ENCODE measurements at regions of chr22 and their contacts with region 1.

Region 1: DNA sequence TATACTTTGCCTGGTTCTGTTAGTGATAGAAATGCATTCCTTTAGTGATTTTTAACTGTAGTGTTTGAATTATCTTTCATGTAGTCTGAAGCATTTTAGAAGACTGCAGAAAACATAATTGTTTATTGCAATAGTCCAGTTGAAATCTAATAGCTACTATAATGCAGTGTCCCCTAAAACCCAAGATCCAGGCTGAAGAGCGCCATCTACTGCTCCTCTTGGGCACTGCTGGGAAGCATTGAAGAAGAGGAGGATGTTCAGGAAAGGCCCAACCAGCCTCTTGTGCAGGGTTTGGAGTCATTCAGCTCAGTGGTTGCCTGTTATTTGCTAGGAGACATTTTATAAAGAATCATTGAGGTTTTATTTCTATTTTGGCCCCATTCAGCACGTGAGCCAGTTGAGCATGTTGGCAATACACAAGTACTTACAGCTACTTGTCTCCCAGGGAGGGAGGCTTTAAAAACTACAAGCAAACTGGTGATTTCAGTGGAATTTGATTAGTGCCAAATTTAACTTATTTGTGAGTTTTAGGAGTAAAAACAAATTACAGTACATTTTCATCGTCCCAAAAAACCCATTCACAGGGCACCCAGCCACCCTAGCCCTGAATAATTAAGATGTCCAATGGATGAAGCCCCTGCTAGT is 74.9 kb upstream of the HORMAD2 start:
- H3K4me3 ChIP-seq: no peak overlapping the region
- H3K27ac ChIP-seq: no peak overlapping the region
- H3K4me1 ChIP-seq: no peaks in the 10 kb centered on the region
- CTCF ChIP-seq: peak; percentile 71

Region 2: DNA sequence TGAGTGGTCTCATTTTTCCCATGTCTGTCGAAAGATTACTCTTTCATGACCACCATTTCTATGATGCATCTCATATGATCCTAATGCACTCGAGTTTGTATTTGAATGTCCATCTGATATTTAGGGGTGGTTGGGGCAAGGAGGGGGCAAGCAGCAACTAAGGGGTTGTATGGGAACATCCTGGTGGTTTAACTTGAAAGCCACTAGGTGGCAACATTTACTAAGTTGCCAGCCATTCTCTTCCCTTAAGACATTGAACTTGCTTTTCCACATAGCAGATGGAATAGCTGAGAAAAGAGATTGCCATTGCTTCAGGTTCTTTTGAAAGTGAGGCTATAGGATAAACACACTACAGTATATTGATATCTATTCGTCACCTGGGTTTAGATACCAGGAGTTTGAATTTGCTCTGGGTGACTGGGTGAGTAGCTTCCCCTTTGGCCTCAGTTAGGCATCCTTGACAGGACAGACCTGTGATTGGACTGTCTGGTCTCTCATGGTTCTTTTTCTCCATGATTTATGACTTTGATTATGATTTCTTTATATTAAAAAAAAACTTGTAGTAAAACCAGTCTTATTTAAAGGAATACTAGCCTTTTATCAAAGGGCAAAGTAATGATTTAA is 369.5 kb before region 1 on chr22:
- CTCF ChIA-PET with region 1: interaction called, 43 read pairs
- POLR2A ChIA-PET with region 1: no interaction called
- H3K4me3 ChIP-seq: no peak overlapping the region
- H3K27ac ChIP-seq: no peak overlapping the region
- H3K4me1 ChIP-seq: no peaks in the 10 kb centered on the region; the same call in 1 of the 2 replicates
- CTCF ChIP-seq: peak; percentile 70; the same call in 1 of the 2 replicates

Region 3: GRCh38 chr22:29772170-29772641 is 233.1 kb before region 1 on chr22:
- CTCF ChIA-PET with region 1: interaction called, 11 read pairs
- POLR2A ChIA-PET with region 1: no interaction called
- H3K4me3 ChIP-seq: no peak overlapping the region
- H3K27ac ChIP-seq: no peak overlapping the region
- H3K4me1 ChIP-seq: no peaks in the 10 kb centered on the region
- CTCF ChIP-seq: 0 out of 2 replicates have a peak, but pooled peaks have one; percentile 39

Region 4: GRCh38 chr22:29820961-29821789 is 184.2 kb before region 1 on chr22:
- CTCF ChIA-PET with region 1: interaction called, 24 read pairs
- POLR2A ChIA-PET with region 1: interaction called, 4 read pairs
- H3K4me3 ChIP-seq: no peak overlapping the region
- H3K27ac ChIP-seq: no peak overlapping the region
- H3K4me1 ChIP-seq: peaks cover 6% of the 10 kb centered on the region
- CTCF ChIP-seq: no peak; the same call in 1 of the 2 replicates

Region 5: DNA sequence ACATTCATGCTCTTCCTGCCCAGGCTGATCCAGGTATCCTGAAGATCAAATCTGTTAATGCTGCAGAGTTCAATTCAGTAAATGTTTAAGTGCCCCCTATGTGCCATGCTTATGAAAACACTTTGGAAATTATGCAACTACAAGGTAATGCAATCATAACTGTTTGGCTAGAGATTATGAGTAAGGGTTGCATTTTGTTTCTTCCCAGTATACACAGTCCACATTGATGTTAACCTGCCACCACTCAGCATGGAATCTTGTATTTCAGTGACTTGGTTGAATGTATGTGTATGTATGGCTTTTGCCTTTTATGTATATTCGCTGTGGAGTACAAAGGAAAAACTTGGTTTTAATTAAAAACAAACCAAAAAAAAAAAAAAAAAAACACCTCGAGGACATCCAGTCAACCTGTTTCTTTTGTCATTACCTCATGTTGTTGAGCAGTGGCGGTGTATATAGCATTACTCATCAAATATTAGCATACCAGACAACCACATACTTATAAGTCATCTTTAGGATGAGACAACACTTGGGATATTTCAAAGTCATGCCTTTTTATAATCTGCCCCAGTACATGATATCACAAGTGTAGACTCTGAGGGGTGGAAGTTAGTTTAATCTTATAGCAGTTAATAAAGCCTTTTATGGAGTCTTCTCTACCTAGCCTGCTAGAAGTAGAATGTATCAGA is 11.2 kb before region 1 on chr22:
- CTCF ChIA-PET with region 1: interaction called, 50 read pairs
- POLR2A ChIA-PET with region 1: no interaction called
- H3K4me3 ChIP-seq: no peak overlapping the region
- H3K27ac ChIP-seq: peak overlapping the region; percentile 63
- H3K4me1 ChIP-seq: peaks cover 43% of the 10 kb centered on the region
- CTCF ChIP-seq: no peak

Region 6: DNA sequence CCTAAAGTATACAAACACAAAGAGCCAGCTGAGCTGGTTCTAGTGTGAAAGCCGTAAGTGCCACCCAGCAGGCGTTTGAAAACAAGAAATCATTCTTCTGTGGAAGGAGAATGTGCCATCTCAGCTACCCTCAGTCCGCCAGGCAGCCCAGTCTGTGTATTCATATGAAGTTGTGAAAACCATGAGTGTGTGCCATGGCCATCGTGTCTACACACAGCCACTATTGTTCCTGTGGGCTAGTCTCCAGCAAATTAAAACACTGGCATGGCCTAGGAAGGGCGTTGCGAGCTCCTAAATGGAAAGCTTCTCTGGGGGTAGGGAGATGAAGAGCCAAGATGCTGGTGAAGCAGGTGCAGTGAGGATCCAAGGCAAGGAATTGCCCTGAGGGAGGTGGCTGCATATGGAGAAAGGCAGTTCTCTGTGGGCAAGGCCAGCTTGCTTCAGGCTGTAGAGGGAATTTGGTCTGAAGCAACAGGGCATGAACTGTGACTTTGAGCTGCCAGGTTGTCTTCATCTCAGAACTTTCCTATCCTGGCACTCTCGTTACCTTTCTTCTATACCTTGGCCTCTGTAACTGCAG is 23.5 kb after region 1 on chr22:
- CTCF ChIA-PET with region 1: interaction called, 16 read pairs
- POLR2A ChIA-PET with region 1: no interaction called
- H3K4me3 ChIP-seq: no peak overlapping the region
- H3K27ac ChIP-seq: no peak overlapping the region
- H3K4me1 ChIP-seq: no peaks in the 10 kb centered on the region
- CTCF ChIP-seq: no peak